Activated CD4-positive, alpha-beta memory T cell treated with anti-CD3 and anti-CD28 coated beads, Interleukin-2, amount 10 ng/mL, durations not matched to agents 7 days and 5 days (primary cell): ENCODE measurements at regions of chr4 and their contacts with region 1.

Region 1: GRCh38 chr4:74376888-74377483 is 12.0 kb downstream of the EREG start:
- DNase-seq: no peak
- H3K4me3 Mint-ChIP-seq: no peak overlapping the region
- H3K27ac Mint-ChIP-seq: no peak overlapping the region
- H3K4me1 Mint-ChIP-seq: peaks cover 2% of the 10 kb centered on the region
- H3K27me3 Mint-ChIP-seq: peaks cover 8% of the 10 kb centered on the region

Region 2: DNA sequence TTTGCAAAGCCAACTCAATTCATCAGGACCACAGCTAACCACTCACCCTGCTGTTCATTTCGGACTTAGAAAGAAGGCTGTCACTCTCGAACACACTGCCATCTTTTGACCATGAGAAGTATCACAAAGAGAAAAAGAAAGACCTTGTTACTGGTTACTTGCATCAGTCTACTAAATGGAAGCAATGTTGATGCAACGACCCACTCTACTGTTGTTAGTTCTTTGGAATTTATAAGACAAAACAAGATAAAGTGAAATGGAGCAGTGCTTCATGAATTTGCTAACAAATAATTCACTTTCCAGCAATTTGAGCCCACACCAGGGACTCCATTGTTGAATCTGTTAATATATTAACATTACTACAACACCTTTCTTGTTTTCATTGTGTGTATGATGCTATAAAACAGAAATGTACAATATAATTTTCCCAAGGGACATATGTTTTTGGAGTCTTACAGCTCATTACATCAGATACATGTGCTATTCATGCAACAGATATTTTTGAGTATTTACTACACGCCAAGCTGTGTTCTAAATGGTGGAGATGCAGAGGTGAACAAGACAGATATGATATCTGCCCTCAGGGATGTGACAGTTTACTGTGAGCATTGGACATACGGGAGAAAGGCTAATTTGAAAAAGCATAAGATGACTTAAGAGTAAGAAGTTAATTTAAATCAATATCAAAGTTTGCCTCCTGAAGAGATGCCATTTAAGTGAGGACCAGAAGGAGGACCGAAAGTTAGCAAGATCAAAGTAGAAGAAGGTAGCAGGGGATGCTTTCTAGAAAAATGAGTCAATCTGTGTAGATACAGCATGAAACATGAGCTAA is 155.2 kb after region 1 on chr4:
- CTCF ChIA-PET with region 1: interaction called, 12 read pairs
- POLR2A ChIA-PET with region 1: no interaction called
- DNase-seq: no peak
- H3K4me3 Mint-ChIP-seq: no peak overlapping the region
- H3K27ac Mint-ChIP-seq: no peak overlapping the region
- H3K4me1 Mint-ChIP-seq: peaks cover 2% of the 10 kb centered on the region
- H3K27me3 Mint-ChIP-seq: peaks cover 6% of the 10 kb centered on the region

Region 3: DNA sequence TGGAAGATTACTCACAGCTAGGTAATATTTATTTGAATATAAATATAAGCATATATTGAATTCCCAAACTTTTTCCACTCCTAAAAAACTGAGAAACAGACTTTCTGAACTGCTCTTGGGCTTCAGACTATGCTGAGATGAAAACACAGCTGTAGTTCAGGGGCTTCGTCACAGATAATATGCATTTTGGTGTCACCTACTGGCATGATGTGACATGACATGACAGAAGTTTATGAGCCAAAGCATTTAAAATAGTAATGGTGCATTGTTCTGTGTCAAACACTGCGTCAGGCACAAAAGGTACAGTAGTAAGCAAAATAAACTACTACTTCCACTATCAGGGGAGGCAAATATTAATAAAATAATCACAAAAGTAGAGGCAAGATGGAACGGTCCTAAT is 246.1 kb after region 1 on chr4:
- CTCF ChIA-PET with region 1: interaction called, 15 read pairs
- POLR2A ChIA-PET with region 1: no interaction called
- DNase-seq: no peak
- H3K4me3 Mint-ChIP-seq: no peak overlapping the region
- H3K27ac Mint-ChIP-seq: no peak overlapping the region
- H3K4me1 Mint-ChIP-seq: peaks cover 12% of the 10 kb centered on the region
- H3K27me3 Mint-ChIP-seq: no peaks in the 10 kb centered on the region